ENCODE measurements at regions of chr5 and their contacts with region 1.

Region 1: DNA sequence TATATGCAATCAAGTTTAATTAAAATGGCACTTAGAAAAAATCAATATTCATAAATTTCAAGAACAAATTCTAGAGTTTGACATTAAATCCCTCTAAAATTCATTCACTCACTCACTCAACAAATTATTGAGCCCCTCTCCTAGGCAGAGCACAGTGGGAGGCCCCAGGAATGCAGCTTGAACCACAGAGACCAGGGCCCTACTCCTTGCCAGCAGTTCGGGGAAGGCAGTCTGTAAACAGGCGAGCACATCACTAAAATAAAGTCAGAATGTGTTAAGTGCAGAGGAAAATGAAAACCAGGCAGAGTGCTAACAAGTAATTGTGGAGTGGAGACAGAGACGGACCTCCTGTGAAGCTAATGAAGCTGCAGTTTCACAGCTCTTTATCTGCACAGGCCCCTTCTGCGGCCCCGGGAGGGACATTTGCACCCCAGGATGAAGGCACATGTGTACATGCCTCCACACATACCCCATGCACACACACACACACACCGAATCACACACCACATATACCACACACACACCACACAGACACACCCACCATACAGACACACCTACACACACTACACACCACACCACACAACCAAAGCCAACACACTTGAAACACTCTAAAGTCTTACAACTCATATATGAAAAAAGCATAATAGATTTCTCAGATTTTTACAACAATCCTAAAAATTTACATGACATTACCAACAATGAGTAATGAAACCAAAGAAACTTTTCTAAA is 40.5 kb downstream of the BHMT start:
- DNase-seq: no peak
- ATAC-seq: no peak
- H3K4me3 ChIP-seq: no peak overlapping the region
- H3K27ac ChIP-seq: no peak overlapping the region
- H3K4me1 ChIP-seq: no peaks in the 10 kb centered on the region
- H3K27me3 ChIP-seq: no peaks in the 10 kb centered on the region
- CTCF ChIP-seq: no peak
- POLR2A ChIP-seq: no peak

Region 2: DNA sequence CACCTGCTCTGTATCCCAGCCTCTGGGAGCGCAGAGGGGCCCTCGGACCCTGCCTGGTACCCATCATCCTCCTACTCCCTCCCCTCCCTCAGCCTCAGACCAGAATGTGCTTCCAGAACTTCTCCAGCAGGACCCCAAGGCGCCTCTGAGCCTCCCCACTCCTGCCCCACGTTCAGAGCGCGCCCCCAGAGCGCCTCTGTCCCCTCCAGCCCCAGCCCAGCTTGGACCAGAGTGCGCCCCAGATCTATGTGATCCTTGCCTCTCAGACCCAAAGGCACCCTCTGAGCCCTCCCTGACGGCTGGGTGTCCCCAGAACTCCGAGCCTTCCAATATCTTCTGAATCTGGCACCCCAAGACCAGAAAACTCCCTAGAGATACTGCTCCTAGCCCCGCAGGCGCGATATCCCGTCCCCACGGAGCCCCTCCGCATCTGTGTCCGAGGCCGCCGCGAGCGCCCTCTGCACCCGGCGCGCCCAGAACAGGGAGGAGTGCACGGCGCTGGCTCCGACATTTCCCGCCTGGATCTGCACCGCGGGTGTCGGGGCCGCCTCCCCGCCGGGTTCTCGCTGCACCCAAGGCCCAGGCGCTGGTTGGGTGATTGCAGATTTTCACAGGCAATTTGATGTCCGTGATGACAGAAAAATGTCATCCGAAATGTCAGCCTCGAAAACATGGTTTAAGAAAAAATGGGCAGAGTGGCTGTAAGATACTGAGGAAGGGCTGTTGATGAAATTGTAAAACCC is 40.0 kb before region 1 on chr5:
- intact Hi-C with region 1: no loop called
- DNase-seq: no peak
- ATAC-seq: peak in 2 of 4 donors; percentile 45 to 60
- H3K4me3 ChIP-seq: peak overlapping the region in 5 of 12 donors; percentile 8 to 19 (median 12)
- H3K27ac ChIP-seq: no peak overlapping the region
- H3K4me1 ChIP-seq: peaks cover 0 to 21% (median 2%) of the 10 kb centered on the region in 12 donors
- H3K27me3 ChIP-seq: peaks cover 9 to 61% (median 31%) of the 10 kb centered on the region in 9 donors
- CTCF ChIP-seq: no peak
- POLR2A ChIP-seq: no peak

Region 3: DNA sequence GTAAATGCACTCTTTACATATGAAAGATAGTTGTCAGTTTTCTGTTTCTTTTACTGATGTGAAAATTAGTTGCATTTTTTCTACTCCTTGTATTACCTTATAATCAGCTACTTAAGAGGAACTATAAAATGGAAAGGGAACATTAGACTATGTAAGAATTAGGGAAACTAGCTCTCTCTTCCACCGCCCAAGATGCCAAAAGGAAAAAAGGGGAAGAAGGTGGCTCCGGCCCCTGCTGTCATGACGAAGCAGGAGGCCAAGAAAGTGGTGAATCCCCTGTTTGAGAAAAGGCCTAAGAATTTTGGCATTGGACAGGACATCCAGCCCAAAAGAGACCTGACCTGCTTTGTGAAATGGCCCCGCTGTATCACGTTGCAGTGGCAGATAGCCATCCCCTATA is 377.0 kb after region 1 on chr5:
- intact Hi-C with region 1: loop called in 1 of 10 experiments (anchors 5 kb)
- DNase-seq: no peak
- ATAC-seq: no peak
- H3K4me3 ChIP-seq: no peak overlapping the region
- H3K27ac ChIP-seq: no peak overlapping the region
- H3K4me1 ChIP-seq: no peaks in the 10 kb centered on the region
- H3K27me3 ChIP-seq: no peaks in the 10 kb centered on the region
- CTCF ChIP-seq: no peak
- POLR2A ChIP-seq: no peak